ENCODE measurements at regions of chr17 and their contacts with region 1.

Region 1: DNA sequence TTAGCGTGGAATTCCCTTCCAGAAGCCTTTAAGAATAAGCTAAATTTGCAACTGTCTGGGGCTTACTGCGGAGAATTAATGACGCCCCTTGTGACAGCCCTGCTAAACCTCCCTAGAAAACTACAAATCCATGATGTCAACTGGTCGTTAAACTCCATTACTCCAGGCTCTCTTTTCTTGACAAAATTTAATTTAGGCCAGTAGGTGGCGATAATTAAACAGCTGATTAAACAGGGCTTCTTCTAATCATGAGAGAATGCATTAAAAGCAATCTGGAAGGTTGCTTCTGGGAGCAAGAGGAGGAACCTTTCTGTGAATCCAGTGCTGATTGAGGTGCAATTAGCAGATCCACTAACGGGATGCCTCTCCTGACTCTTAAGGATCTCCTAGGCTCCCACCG is 8.1 kb upstream of the NLRP1 start:
- DNase-seq: no peak
- H3K4me3 ChIP-seq: no peak overlapping the region
- H3K27ac ChIP-seq: no peak overlapping the region
- H3K4me1 ChIP-seq: no peaks in the 10 kb centered on the region
- H3K27me3 ChIP-seq: no peaks in the 10 kb centered on the region
- CTCF ChIP-seq: peak; percentile 50

Region 2: DNA sequence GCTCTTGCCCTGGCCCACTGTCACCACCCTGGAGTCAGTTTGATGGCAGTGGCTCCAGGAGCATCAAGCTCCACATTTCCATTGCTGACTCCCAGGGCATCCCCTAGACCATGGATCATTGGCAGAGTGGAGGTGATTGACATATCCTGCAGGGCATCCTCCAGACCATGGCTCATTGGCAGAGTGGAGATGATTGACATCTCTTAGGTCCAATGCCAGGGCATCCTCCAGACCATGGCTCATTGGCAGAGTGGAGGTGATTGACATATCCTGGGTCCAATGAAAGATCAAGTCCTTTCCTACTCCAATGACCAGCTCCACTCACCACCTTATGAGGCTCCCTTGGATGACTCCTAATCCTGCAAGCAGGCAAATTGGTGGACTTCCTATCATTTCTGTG is 166.3 kb after region 1 on chr17:
- intact Hi-C with region 1: no loop called
- DNase-seq: peak; percentile 17
- H3K4me3 ChIP-seq: no peak overlapping the region
- H3K27ac ChIP-seq: no peak overlapping the region
- H3K4me1 ChIP-seq: no peaks in the 10 kb centered on the region
- H3K27me3 ChIP-seq: no peaks in the 10 kb centered on the region
- CTCF ChIP-seq: no peak

Region 3: GRCh38 chr17:6435968-6436367 is 843.6 kb after region 1 on chr17:
- intact Hi-C with region 1: loop called (anchors 5 kb)
- DNase-seq: peak; percentile 56
- H3K4me3 ChIP-seq: no peak overlapping the region
- H3K27ac ChIP-seq: no peak overlapping the region
- H3K4me1 ChIP-seq: no peaks in the 10 kb centered on the region
- H3K27me3 ChIP-seq: no peaks in the 10 kb centered on the region
- CTCF ChIP-seq: peak; percentile 83

Measured in colonic mucosa (tissue), 4 donors.